ENCODE measurements at regions of chr1 and their contacts with region 1.

Region 1: DNA sequence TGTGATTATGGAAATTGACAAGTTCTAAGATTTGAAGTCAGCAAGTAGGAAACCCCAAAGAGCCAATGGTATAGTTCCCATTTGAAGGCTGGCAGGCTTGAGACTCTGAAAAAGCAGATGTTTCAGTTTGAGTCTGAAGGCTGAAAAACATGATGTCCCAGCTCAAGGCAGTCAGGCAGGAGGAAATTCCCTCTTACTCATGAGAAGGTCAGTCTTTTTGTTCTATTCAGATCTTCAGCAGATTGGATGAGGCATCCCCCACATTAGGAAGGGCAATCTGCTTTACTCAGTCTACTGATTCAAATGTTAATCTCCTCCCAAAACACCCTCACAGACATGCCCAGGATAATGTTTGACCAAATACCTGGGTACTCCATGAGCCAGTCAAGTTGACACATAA is 372.5 kb upstream of the ST6GALNAC5 start:
- DNase-seq: no peak
- ATAC-seq: no peak
- H3K4me3 ChIP-seq: no peak overlapping the region
- H3K27ac ChIP-seq: no peak overlapping the region
- H3K4me1 ChIP-seq: no peaks in the 10 kb centered on the region
- H3K27me3 ChIP-seq: no peaks in the 10 kb centered on the region
- CTCF ChIP-seq: no peak
- POLR2A ChIP-seq: no peak

Region 2: GRCh38 chr1:76463278-76463677 is 31.5 kb before region 1 on chr1:
- intact Hi-C with region 1: loop called in 1 of 10 experiments (anchors 2 kb)
- DNase-seq: no peak
- ATAC-seq: no peak
- H3K4me3 ChIP-seq: no peak overlapping the region
- H3K27ac ChIP-seq: no peak overlapping the region
- H3K4me1 ChIP-seq: no peaks in the 10 kb centered on the region
- H3K27me3 ChIP-seq: no peaks in the 10 kb centered on the region
- CTCF ChIP-seq: no peak
- POLR2A ChIP-seq: no peak

Region 3: DNA sequence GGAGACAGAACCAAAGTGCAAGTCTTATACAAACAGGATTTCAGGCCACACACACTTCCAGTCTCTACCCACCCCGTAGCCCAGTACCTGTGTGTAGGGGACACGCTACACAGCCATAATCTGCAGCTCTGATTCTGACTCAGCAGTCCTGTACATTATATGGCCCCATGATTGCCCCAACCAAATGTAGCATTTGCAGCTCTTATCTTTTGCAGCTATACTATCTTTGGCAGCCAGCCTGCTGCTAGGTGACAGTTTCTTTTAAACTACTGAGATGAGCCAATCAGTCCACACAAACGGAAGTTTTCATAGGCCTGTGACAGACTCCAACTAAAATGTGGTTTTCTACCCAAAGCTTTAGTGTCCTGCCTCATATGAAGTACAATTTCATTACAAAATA is 112.9 kb after region 1 on chr1:
- intact Hi-C with region 1: no loop called
- DNase-seq: no peak
- ATAC-seq: no peak
- H3K4me3 ChIP-seq: no peak overlapping the region
- H3K27ac ChIP-seq: no peak overlapping the region
- H3K4me1 ChIP-seq: no peaks in the 10 kb centered on the region
- H3K27me3 ChIP-seq: no peaks in the 10 kb centered on the region
- CTCF ChIP-seq: no peak
- POLR2A ChIP-seq: no peak